Activated naive CD4-positive, alpha-beta T cell treated with anti-CD3 and anti-CD28 coated beads, Interleukin-2, amount 10 ng/mL, durations not matched to agents 7 days and 5 days (primary cell): ENCODE measurements at regions of chr11 and their contacts with region 1.

Region 1: GRCh38 chr11:111601979-111602864 is at the start of gene SIK2:
- DNase-seq: peak; percentile 92
- H3K4me3 Mint-ChIP-seq: peak within 1 kb of the TSS; percentile 87
- H3K27ac Mint-ChIP-seq: peak within 1 kb of the TSS; percentile 86
- H3K4me1 Mint-ChIP-seq: peaks cover 24% of the 10 kb centered on the region
- H3K27me3 Mint-ChIP-seq: peaks cover 10% of the 10 kb centered on the region

Region 2: GRCh38 chr11:111573821-111574249 is 28.4 kb before region 1 on chr11:
- CTCF ChIA-PET with region 1: no interaction called
- DNase-seq: no peak
- H3K4me3 Mint-ChIP-seq: no peak overlapping the region
- H3K27ac Mint-ChIP-seq: no peak overlapping the region
- H3K4me1 Mint-ChIP-seq: no peaks in the 10 kb centered on the region
- H3K27me3 Mint-ChIP-seq: peaks cover 7% of the 10 kb centered on the region

Region 3: GRCh38 chr11:111586388-111586831 is 15.8 kb before region 1 on chr11:
- CTCF ChIA-PET with region 1: interaction called, 14 read pairs
- DNase-seq: peak; percentile 62
- H3K4me3 Mint-ChIP-seq: no peak overlapping the region
- H3K27ac Mint-ChIP-seq: no peak overlapping the region
- H3K4me1 Mint-ChIP-seq: no peaks in the 10 kb centered on the region
- H3K27me3 Mint-ChIP-seq: peaks cover 3% of the 10 kb centered on the region

Region 4: GRCh38 chr11:111741751-111742150 is 139.5 kb after region 1 on chr11:
- CTCF ChIA-PET with region 1: interaction called, 10 read pairs
- DNase-seq: no peak
- H3K4me3 Mint-ChIP-seq: no peak overlapping the region
- H3K27ac Mint-ChIP-seq: no peak overlapping the region
- H3K4me1 Mint-ChIP-seq: peaks cover 1% of the 10 kb centered on the region
- H3K27me3 Mint-ChIP-seq: no peaks in the 10 kb centered on the region

Region 5: DNA sequence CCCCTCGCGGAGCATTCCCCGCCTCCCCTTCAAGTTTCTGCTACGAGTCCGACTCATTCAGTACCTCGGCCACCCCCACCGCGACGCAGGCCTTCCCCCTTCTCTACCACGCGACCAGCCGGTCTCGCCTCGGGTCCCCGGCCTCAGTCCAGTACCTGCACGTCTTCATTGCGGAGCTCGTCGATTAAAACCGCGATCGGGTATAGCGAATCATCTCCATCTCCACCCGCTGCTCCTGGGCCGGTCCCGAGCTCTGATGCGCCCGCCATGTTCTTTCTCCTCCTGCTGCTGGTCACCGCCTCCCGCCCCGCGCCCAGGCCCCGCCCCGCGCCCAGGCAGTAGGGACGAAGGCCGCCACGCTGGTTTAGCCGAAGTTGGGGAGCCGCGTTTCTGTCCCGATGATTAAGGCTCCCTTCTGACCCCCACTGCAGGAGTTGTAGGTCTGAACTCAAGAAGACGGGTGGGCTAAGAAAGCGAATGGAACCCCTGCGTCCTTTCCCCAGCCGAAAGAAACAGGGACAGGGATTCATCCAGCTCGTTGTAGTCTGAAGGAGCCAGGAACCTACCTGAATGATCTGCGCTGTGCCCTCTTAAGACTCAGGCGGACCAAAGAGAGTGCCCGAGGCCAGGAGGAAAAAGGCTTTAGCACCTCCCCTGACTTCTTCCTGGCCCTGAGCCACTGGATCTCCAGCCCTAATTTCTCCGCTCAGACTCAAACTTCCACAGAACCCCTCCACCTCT is 164.0 kb after region 1 on chr11 and contains the start of gene PPP2R1B:
- CTCF ChIA-PET with region 1: interaction called, 11 read pairs
- DNase-seq: peak; percentile 83
- H3K4me3 Mint-ChIP-seq: peak within 1 kb of the TSS; percentile 94
- H3K27ac Mint-ChIP-seq: peak within 1 kb of the TSS; percentile 95
- H3K4me1 Mint-ChIP-seq: peaks cover 39% of the 10 kb centered on the region
- H3K27me3 Mint-ChIP-seq: no peaks in the 10 kb centered on the region

Region 6: DNA sequence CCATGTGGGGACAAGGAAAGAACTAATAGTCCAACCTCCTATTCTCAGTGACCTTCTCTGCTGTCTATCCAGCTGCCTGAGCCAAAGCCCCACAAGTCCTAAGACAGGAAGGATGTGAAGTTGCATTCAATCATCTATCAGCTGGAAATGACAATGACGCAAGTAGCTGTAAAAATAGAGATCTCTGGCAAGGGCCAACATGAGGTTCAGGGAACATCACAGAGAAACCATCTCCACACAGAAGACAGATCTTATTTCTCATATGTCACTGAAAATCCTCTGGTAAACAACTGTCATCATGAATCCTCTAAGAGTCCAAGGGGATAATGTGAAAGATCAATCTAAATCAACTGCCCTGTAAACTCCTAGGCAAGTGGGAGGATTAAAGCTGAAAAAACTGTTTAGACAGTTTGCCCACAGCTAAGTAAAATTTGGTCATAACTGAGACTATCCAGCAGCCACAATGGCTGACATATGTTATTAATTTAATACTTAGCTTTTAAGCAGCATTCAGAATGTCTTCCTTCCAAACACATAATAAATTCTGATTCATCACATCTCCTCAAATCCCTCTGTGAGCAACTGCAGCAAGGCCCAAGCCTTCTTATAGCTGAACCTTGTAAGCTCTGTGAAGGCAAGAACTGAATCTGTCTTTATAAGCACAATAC is 217.1 kb after region 1 on chr11:
- CTCF ChIA-PET with region 1: no interaction called
- DNase-seq: no peak
- H3K4me3 Mint-ChIP-seq: no peak overlapping the region
- H3K27ac Mint-ChIP-seq: no peak overlapping the region
- H3K4me1 Mint-ChIP-seq: no peaks in the 10 kb centered on the region
- H3K27me3 Mint-ChIP-seq: no peaks in the 10 kb centered on the region